Mammary epithelial cell (primary cell): ENCODE measurements at regions of chr2 and their contacts with region 1.

Region 1: GRCh38 chr2:112947374-112947773 is 30.4 kb upstream of the IL36G start:
- DNase-seq: no peak
- H3K4me3 ChIP-seq: no peak overlapping the region
- H3K27ac ChIP-seq: no peak overlapping the region
- H3K4me1 ChIP-seq: peaks cover 6% of the 10 kb centered on the region
- H3K27me3 ChIP-seq: no peaks in the 10 kb centered on the region
- CTCF ChIP-seq: no peak

Region 2: GRCh38 chr2:112764071-112765044 is 183.0 kb before region 1 on chr2 and contains the start of gene CKAP2L:
- CTCF ChIA-PET with region 1: no interaction called
- dilution Hi-C with region 1: loop called (anchors 5 kb)
- in situ Hi-C with region 1: no loop called
- intact Hi-C with region 1: no loop called
- DNase-seq: peak; percentile 98
- H3K4me3 ChIP-seq: peak within 1 kb of the TSS; percentile 70 to 79 (median 76)
- H3K27ac ChIP-seq: peak within 1 kb of the TSS; percentile 84
- H3K4me1 ChIP-seq: peaks cover 28% of the 10 kb centered on the region
- H3K27me3 ChIP-seq: no peaks in the 10 kb centered on the region
- CTCF ChIP-seq: no peak
- total RNA-seq, gene CKAP2L: 0.83 to 32.7 TPM

Region 3: GRCh38 chr2:112869258-112869885 is 78.0 kb before region 1 on chr2:
- CTCF ChIA-PET with region 1: interaction called, 25 read pairs
- dilution Hi-C with region 1: no loop called
- in situ Hi-C with region 1: no loop called
- intact Hi-C with region 1: no loop called
- DNase-seq: peak; percentile 99
- H3K4me3 ChIP-seq: no peak overlapping the region
- H3K27ac ChIP-seq: peak overlapping the region; percentile 88
- H3K4me1 ChIP-seq: peaks cover 42% of the 10 kb centered on the region
- H3K27me3 ChIP-seq: no peaks in the 10 kb centered on the region
- CTCF ChIP-seq: no peak